Activated naive CD8-positive, alpha-beta T cell treated with anti-CD3 and anti-CD28 coated beads, Interleukin-2, amount 10 ng/mL, durations not matched to agents 7 days and 5 days (primary cell): ENCODE measurements at regions of chr4 and their contacts with region 1.

Region 1: GRCh38 chr4:153488006-153488891 is 22.1 kb downstream of the TMEM131L start:
- DNase-seq: peak; percentile 79
- ATAC-seq: peak; percentile 61
- H3K4me3 Mint-ChIP-seq: peak overlapping the region; percentile 82
- H3K27ac Mint-ChIP-seq: peak overlapping the region; percentile 95
- H3K4me1 Mint-ChIP-seq: peaks cover 66% of the 10 kb centered on the region
- H3K27me3 Mint-ChIP-seq: no peaks in the 10 kb centered on the region

Region 2: GRCh38 chr4:153497988-153498967 is 10.0 kb after region 1 on chr4:
- POLR2A ChIA-PET with region 1: interaction called, 11 read pairs
- DNase-seq: no peak
- ATAC-seq: no peak
- H3K4me3 Mint-ChIP-seq: peak overlapping the region; percentile 70
- H3K27ac Mint-ChIP-seq: peak overlapping the region; percentile 87
- H3K4me1 Mint-ChIP-seq: peaks cover 76% of the 10 kb centered on the region
- H3K27me3 Mint-ChIP-seq: no peaks in the 10 kb centered on the region

Region 3: DNA sequence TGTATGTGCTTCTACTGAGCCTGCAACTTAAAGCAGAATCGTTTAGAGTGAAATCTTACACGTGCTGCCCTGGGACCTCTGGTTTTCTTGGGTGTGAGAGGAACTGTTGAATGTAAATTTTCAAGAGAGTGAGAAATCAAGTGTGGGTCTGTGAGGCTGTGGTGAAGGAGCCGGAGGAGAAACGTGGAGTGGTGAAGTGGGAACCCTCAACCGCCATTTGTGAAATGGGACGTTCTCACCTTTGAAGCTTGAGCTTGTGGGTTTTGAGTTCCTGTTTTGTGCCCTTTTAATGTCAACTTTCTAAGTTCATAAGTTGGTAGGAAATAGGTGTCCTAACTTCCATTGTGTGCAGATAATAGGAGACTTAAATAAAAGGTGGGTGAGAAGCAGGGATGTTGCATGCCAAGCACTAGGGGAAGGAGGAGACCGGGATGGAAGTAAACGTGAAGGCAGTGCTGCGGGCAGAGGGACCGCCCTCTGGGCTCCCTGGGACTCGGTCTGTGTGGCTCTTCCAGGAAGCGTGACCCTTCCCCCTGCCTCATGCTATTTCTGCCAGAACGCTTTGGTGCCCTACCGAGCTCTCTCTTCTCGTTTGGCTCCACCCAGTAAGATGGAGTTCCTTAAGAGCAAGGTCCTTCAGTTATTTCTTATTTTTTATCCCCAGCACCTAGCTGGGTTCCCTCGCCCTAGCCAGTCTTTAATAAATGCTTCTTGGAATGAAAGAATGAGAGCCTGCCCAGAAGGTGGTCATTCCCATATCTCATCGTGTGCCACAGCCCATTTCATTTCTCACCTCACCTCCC is 34.0 kb after region 1 on chr4:
- POLR2A ChIA-PET with region 1: interaction called, 31 read pairs
- DNase-seq: peak; percentile 78
- ATAC-seq: peak; percentile 88
- H3K4me3 Mint-ChIP-seq: peak overlapping the region; percentile 72
- H3K27ac Mint-ChIP-seq: peak overlapping the region; percentile 88
- H3K4me1 Mint-ChIP-seq: peaks cover 83% of the 10 kb centered on the region
- H3K27me3 Mint-ChIP-seq: no peaks in the 10 kb centered on the region